MCF 10A (cell line): ENCODE measurements at regions of chr1 and their contacts with region 1.

Region 1: DNA sequence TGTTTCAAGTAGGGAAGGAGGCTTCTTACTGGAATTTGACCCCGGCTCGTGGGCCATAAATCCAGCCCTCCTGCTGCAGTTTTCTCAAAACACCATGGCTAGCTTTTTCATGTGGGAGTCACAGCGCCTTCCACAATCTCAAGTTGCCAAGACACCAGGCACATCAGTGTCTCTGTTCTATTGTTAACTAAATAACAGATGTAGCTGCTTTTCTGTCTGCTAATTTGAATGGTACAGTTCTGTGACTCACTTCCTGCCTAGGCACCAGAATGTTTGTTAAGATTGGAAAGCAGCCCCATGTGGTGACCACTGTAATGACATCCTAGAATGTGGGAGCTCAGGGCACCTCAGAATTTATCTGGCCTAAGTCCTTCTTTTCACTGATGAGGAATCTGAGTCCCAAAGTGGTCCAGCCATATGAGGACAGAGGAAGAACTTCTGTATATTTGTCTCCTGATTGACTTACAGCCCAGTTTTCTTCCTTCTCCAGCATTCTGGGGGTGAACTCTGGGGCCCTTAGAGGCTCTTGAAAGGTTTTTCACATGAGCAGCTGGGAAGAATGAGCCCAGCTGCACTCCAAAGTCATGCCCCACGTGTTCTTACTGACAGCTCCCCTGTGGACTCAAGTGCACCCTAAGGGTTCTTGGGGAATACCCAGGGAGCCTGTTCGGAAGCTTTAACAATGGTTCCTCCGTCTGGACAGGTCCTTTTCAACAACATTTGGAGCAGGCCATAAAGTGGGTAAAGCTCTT is 27.5 kb downstream of the TRIM45 start:
- DNase-seq: peak; percentile 78
- H3K4me3 Mint-ChIP-seq: no peak overlapping the region
- H3K27ac Mint-ChIP-seq: peak overlapping the region; percentile 93
- H3K4me1 Mint-ChIP-seq: peaks cover 36% of the 10 kb centered on the region
- H3K27me3 Mint-ChIP-seq: no peaks in the 10 kb centered on the region
- CTCF ChIP-seq: peak; percentile 40

Region 2: DNA sequence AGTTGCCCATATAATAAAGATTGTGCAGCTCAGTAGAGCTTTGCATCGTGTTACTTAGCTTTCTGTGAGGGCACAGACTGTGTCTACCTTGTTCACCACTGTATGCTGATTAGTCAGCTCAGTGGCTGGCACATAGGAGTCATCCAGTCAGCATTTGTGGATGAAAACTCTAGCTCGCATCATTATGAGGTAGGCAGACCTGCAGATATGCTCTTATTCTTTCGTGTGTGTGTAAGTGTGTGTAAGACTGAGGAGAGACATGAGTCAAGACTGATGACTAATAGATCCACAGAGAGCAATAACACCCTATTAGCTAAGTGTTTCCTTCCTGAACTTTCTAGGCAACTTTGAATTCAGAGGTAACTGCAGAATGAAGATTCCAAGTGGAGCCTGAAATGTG is 16.8 kb before region 1 on chr1:
- CTCF ChIA-PET with region 1: interaction called, 6 read pairs
- POLR2A ChIA-PET with region 1: interaction called, 34 read pairs
- intact Hi-C with region 1: loop called (anchors 1 kb)
- DNase-seq: peak; percentile 87
- H3K4me3 Mint-ChIP-seq: no peak overlapping the region
- H3K27ac Mint-ChIP-seq: peak overlapping the region; percentile 80
- H3K4me1 Mint-ChIP-seq: peaks cover 10% of the 10 kb centered on the region
- H3K27me3 Mint-ChIP-seq: no peaks in the 10 kb centered on the region
- CTCF ChIP-seq: no peak

Region 3: DNA sequence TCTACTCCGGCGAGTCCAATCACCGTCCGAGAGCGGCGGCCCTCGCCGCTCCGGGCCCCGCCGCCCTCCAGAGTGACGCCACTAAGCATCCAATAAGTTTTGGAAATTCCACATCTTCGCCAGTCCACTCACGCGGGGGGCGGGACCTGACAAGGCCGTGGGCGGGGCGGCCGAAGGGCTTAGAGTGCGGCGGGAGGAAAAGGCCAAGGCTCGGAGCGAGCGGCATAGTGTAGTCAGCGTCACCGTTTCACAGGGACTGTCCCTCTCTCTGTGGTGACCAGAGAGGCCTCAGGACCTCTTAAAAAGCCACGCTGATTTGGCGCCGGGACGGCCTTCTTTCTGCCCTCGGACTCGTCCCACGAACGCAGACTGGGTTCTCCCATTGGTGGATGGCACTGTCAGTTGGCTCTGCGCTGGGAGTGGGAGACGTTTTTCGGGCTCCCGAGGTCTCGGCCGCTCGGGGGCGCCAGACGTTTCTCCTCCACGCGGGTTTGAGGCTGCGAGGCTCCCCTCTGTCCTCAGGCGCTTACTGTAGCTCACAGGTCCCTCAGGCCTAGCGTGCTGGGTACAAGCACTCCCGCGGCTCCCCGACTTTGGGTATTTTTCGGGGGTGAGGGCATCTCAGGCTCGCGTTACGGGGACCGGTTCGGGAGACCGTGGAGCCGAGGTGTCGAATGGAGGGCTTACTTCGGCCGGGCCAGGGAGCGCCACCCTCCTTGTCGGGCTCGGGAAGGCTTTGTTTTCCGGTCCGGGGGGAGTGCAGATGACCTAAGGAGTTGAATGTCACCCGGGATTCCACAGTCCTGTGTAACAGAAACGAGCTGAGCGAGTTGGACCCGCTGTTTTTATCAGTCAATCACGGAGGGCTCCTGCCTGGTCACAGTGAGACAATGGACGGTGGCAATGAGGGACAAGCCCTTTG is 28.0 kb after region 1 on chr1:
- CTCF ChIA-PET with region 1: interaction called, 40 read pairs
- POLR2A ChIA-PET with region 1: interaction called, 13 read pairs
- intact Hi-C with region 1: no loop called
- DNase-seq: peak; percentile 95
- H3K4me3 Mint-ChIP-seq: peak overlapping the region; percentile 84
- H3K27ac Mint-ChIP-seq: peak overlapping the region; percentile 86
- H3K4me1 Mint-ChIP-seq: no peaks in the 10 kb centered on the region
- H3K27me3 Mint-ChIP-seq: no peaks in the 10 kb centered on the region
- CTCF ChIP-seq: peak; percentile 37

Region 4: GRCh38 chr1:117128323-117129079 is 34.5 kb after region 1 on chr1:
- CTCF ChIA-PET with region 1: interaction called, 40 read pairs
- POLR2A ChIA-PET with region 1: interaction called, 4 read pairs
- intact Hi-C with region 1: no loop called
- DNase-seq: peak; percentile 52
- H3K4me3 Mint-ChIP-seq: no peak overlapping the region
- H3K27ac Mint-ChIP-seq: no peak overlapping the region
- H3K4me1 Mint-ChIP-seq: peaks cover 11% of the 10 kb centered on the region
- H3K27me3 Mint-ChIP-seq: no peaks in the 10 kb centered on the region
- CTCF ChIP-seq: peak; percentile 42

Region 5: GRCh38 chr1:117166076-117166475 is 72.0 kb after region 1 on chr1:
- CTCF ChIA-PET with region 1: no interaction called
- POLR2A ChIA-PET with region 1: no interaction called
- intact Hi-C with region 1: no loop called
- DNase-seq: peak; percentile 44
- H3K4me3 Mint-ChIP-seq: no peak overlapping the region
- H3K27ac Mint-ChIP-seq: no peak overlapping the region
- H3K4me1 Mint-ChIP-seq: no peaks in the 10 kb centered on the region
- H3K27me3 Mint-ChIP-seq: no peaks in the 10 kb centered on the region
- CTCF ChIP-seq: no peak

Region 6: DNA sequence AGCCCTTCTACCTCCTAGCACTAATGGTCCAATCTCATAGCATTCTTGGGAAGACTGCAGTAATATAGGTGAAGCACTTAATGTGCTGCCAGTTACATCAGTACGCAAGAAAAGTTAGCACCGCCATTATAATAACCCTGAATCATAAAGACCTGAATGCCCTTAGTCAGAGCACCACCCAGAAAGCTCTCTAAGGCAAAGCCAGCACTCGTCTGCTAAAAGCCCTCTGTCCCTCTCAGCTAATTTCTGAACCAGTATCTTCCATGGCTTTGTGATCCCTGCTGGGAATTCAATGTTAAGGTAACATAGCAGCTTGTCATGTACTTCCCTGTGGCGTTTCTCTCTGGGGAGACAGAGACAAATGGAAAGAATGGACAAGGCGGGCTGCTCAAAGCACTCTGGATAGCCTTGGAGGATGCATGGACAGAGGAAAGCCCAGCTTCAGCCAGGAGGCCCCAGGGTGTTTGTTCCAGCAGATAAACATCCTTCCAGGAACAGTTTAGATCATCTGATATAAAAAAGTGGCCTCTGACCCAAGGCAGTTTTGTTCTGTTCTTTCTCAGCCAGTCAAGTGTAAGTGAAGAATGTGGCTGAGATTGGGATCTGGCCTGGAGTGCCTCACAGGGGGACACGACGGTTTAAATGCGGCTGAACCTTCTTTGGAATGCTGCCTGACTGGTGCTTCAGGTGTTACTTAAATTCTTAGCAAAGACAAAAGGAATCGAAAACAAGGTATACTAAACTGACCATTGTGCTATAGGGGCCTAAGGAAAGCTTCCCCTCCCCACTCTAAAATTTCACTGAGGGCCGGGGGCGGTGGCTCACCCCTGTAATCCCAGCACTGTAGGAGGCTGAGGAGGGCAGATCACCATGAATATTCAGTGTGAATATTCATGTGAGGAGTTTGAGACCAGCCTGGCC is 174.7 kb after region 1 on chr1:
- CTCF ChIA-PET with region 1: no interaction called
- POLR2A ChIA-PET with region 1: no interaction called
- intact Hi-C with region 1: no loop called
- DNase-seq: no peak
- H3K4me3 Mint-ChIP-seq: no peak overlapping the region
- H3K27ac Mint-ChIP-seq: no peak overlapping the region
- H3K4me1 Mint-ChIP-seq: no peaks in the 10 kb centered on the region
- H3K27me3 Mint-ChIP-seq: no peaks in the 10 kb centered on the region
- CTCF ChIP-seq: no peak